GM12878 (cell line): ENCODE measurements at regions of chr7 and their contacts with region 1.

Region 1: DNA sequence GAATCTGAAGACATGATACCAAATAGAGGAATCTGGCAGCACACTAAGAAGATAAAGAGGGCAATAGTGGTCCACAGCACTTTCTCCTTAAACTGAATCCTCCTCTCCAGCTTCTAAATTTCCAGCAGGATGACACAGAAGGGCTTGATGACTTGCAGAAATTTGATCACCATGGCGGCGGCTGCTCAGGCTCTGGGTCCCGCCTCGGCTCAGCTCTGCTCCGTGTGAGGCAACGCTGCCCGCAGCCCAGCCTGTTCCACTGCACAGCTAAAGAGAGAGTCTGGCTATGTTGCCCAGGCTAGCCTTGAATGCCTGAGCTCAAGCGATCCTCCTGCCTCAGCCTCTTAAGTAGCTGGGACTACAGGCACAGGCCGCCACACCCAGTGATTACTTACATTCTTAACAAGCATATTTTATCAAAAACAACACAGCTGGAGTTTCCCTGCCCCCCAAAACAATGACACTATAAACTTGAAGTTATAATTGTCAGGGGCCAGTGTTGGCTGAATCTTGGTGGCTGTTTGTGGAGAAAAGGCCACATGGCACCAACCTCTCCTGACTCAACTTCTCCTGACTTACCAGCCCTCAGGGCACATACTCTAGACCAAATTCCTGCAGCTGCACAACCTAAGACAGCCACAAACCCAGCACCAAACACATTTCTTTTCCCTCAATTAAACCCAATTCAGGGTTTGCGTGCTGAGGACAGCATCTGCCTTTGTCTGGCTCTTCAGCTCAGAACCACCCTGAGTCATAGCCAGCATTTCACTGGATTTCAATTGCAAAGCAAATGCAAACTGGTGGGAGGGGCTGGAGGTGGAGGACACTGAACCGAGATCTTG is 11.6 kb upstream of the TNPO3 start:
- DNase-seq: no peak
- ATAC-seq: peak; percentile 35
- H3K4me3 ChIP-seq: no peak overlapping the region
- H3K27ac ChIP-seq: no peak overlapping the region
- H3K4me1 ChIP-seq: no peaks in the 10 kb centered on the region
- H3K27me3 ChIP-seq: no peaks in the 10 kb centered on the region
- CTCF ChIP-seq: no peak
- EP300 ChIP-seq: no peak
- POLR2A ChIP-seq: no peak
- RAD21 ChIP-seq: no peak

Region 2: GRCh38 chr7:128856001-128856718 is 210.4 kb before region 1 on chr7:
- CTCF ChIA-PET with region 1: no interaction called
- POLR2A ChIA-PET with region 1: no interaction called
- RAD21 ChIA-PET with region 1: no interaction called
- SMC1A ChIA-PET with region 1: no interaction called
- in situ Hi-C with region 1: no loop called
- intact Hi-C with region 1: no loop called
- DNase-seq: no peak
- ATAC-seq: no peak; the same call in 1 of the 3 replicates
- H3K4me3 ChIP-seq: no peak overlapping the region
- H3K27ac ChIP-seq: no peak overlapping the region
- H3K4me1 ChIP-seq: no peaks in the 10 kb centered on the region; the same call in 1 of the 2 replicates
- H3K27me3 ChIP-seq: no peaks in the 10 kb centered on the region
- CTCF ChIP-seq: no peak
- EP300 ChIP-seq: no peak
- POLR2A ChIP-seq: no peak
- RAD21 ChIP-seq: no peak

Region 3: DNA sequence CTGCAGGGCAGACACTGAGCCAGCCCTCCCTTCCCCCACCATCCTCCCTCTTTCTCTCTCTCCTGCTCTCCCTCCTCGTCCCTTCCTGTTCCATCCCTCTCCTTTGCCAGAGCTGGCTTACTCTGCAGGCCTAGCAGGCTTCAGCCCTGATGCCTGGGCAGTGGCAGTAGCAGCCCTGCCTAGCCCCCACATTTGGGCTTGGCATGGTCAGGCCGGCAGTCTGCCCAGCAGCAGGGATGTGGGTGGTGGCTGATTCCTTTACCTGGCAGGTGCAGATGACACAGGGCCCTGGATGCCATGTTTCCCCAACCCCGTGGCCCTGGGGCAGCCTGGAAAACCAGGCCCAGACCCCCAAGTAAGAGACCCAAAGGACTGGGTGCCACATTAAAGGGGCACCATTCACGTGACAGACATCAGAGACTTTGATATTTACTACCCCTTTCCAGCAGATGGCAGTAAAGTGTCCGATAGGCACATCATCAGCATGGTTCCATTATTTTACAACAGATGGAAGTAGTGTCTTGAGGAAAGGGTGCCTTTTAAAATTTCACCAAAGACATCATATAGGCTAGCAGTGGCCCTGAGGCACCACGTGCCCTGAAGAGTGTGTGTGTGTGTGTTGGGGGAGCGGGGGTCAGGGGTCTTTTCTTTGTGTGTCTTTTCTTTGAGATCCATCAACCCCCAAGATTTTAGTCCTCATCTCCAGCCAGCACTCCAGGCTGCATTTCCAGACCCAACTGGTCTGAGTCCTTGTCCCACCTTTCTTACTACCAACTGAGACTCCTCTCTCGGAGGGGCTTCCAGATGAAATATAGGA is 161.9 kb before region 1 on chr7:
- CTCF ChIA-PET with region 1: no interaction called
- POLR2A ChIA-PET with region 1: no interaction called
- RAD21 ChIA-PET with region 1: no interaction called
- SMC1A ChIA-PET with region 1: no interaction called
- in situ Hi-C with region 1: no loop called
- intact Hi-C with region 1: no loop called
- DNase-seq: peak; percentile 35
- ATAC-seq: peak; percentile 94
- H3K4me3 ChIP-seq: no peak overlapping the region
- H3K27ac ChIP-seq: no peak overlapping the region
- H3K4me1 ChIP-seq: peaks cover 7% of the 10 kb centered on the region
- H3K27me3 ChIP-seq: no peaks in the 10 kb centered on the region
- CTCF ChIP-seq: peak; percentile 59 to 78 (median 71)
- EP300 ChIP-seq: no peak
- POLR2A ChIP-seq: no peak
- RAD21 ChIP-seq: peak; percentile 92

Region 4: DNA sequence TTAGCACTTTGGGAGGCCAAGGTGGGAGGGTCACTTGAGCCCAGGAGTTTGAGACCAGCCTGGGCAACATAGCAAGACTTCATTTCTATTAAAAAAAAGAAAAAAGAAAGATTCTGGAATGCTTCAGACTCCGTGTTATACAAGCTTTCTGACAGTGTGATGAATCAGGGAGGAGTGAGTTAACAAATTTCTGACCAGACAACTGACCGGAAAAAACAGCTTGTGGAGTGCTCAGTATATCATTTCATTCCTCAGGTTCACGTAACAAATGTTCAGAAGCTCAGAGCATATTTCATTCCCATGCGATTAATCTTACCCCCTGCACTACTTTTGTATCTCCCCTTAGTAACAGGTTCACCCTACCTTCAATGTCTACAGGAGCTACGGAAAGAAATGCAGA is 17.0 kb after region 1 on chr7:
- CTCF ChIA-PET with region 1: no interaction called
- POLR2A ChIA-PET with region 1: interaction called, 5 read pairs
- RAD21 ChIA-PET with region 1: interaction called, 60 read pairs
- SMC1A ChIA-PET with region 1: interaction called, 18 read pairs
- in situ Hi-C with region 1: no loop called
- intact Hi-C with region 1: no loop called
- DNase-seq: no peak
- ATAC-seq: no peak
- H3K4me3 ChIP-seq: no peak overlapping the region
- H3K27ac ChIP-seq: no peak overlapping the region
- H3K4me1 ChIP-seq: no peaks in the 10 kb centered on the region
- H3K27me3 ChIP-seq: no peaks in the 10 kb centered on the region
- CTCF ChIP-seq: no peak
- EP300 ChIP-seq: no peak
- POLR2A ChIP-seq: no peak
- RAD21 ChIP-seq: no peak